CD4-positive, alpha-beta memory T cell (primary cell): ENCODE measurements at regions of chr2 and their contacts with region 1.

Region 1: GRCh38 chr2:74587664-74588277 is 33.3 kb downstream of the DOK1 start:
- DNase-seq: peak; percentile 58 to 68 (median 67)
- H3K4me3 ChIP-seq: no peak overlapping the region
- H3K4me3 Mint-ChIP-seq: no peak overlapping the region
- H3K27ac ChIP-seq: no peak overlapping the region
- H3K27ac Mint-ChIP-seq: no peak overlapping the region
- H3K4me1 ChIP-seq: peaks cover 8% of the 10 kb centered on the region
- H3K4me1 Mint-ChIP-seq: peaks cover 7 to 10% (median 9%) of the 10 kb centered on the region in 4 donors
- H3K27me3 ChIP-seq: peaks cover 13% of the 10 kb centered on the region
- H3K27me3 Mint-ChIP-seq: peaks cover 1 to 8% of the 10 kb centered on the region in 2 donors

Region 2: GRCh38 chr2:74566754-74567085 is 21.1 kb before region 1 on chr2:
- CTCF ChIA-PET with region 1: interaction called, 19 read pairs
- POLR2A ChIA-PET with region 1: interaction called, 5 read pairs
- intact Hi-C with region 1: no loop called
- DNase-seq: no peak
- H3K4me3 ChIP-seq: no peak overlapping the region
- H3K4me3 Mint-ChIP-seq: no peak overlapping the region
- H3K27ac ChIP-seq: no peak overlapping the region
- H3K27ac Mint-ChIP-seq: peak overlapping the region in 1 of 7 donors; percentile 13
- H3K4me1 ChIP-seq: no peaks in the 10 kb centered on the region
- H3K4me1 Mint-ChIP-seq: no peaks in the 10 kb centered on the region
- H3K27me3 ChIP-seq: no peaks in the 10 kb centered on the region
- H3K27me3 Mint-ChIP-seq: peaks cover 6 to 24% of the 10 kb centered on the region in 2 donors

Region 3: DNA sequence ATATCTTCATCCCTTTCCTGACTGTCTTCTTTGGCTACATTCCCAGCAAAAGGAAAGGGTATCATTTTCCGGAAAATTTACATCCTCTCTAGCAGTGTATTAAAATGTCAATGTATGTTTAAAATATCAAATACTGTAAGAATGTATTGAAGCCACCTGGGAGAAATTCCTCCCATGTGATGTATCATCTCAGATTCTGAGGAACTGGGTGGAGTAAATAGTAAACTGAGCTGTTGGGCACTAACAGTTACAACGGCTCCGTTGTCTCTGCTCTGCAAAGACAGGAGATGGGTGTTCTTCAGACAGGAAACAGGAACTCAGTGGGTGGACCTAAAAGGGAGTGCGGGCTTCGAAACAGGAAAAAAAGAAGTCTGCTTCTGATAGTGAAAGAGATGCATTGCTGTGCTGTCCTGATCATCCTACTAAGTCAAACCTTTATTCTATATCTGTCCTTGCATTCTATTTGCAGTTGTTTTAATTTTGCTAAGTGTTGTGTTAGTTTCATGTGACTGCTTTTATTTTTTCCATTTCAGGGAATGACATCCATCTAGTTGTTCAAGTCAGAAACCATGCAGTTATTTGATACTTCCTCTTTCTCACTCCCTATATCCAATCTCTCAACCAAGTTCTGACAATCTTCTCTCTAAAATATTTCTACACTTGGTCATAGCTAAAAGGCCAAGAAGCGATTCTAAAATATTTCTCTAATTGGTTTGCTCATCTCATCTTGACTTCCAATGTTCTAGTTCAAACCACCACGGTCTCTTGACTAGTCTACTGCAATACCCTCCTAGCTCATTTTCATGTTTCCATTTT is 13.8 kb before region 1 on chr2:
- CTCF ChIA-PET with region 1: interaction called, 26 read pairs
- POLR2A ChIA-PET with region 1: interaction called, 7 read pairs
- intact Hi-C with region 1: no loop called
- DNase-seq: peak in 4 of 5 donors; percentile 25 to 37 (median 30)
- H3K4me3 ChIP-seq: peak overlapping the region in 1 of 2 donors; percentile 42
- H3K4me3 Mint-ChIP-seq: peak overlapping the region; percentile 12 to 87 (median 78)
- H3K27ac ChIP-seq: no peak overlapping the region
- H3K27ac Mint-ChIP-seq: peak overlapping the region; percentile 58 to 83 (median 80)
- H3K4me1 ChIP-seq: peaks cover 15% of the 10 kb centered on the region
- H3K4me1 Mint-ChIP-seq: peaks cover 13 to 17% (median 14%) of the 10 kb centered on the region in 4 donors
- H3K27me3 ChIP-seq: no peaks in the 10 kb centered on the region
- H3K27me3 Mint-ChIP-seq: peaks cover 0 to 10% of the 10 kb centered on the region in 2 donors